Left cardiac atrium (tissue), 4 donors: ENCODE measurements at regions of chr9 and their contacts with region 1.

Region 1: GRCh38 chr9:115883457-115884329 is 269.9 kb upstream of the PAPPA start:
- DNase-seq: no peak
- ATAC-seq: peak; percentile 38 to 68

Region 2: DNA sequence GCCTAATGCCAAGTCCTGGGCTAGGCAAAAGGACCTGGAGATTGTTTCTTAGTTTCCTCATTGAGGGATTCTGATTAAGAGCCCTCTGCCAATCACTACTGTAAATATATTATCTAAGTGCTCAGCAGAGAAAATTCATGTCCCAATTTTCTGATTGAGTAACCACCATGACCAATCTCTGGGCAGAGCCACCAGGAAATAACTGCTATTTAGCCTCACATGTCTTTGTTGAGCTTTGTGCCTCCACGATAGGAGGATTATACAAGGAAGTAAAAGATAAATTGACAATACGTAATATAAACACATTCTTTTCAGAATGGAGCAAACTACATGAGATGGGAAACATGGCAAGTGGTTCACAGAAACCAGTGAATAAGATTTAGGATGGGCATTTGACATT is 126.2 kb before region 1 on chr9:
- intact Hi-C with region 1: no loop called
- DNase-seq: no peak
- ATAC-seq: no peak

Region 3: GRCh38 chr9:115815786-115816185 is 67.9 kb before region 1 on chr9:
- intact Hi-C with region 1: no loop called
- DNase-seq: no peak
- ATAC-seq: no peak

Region 4: GRCh38 chr9:115923903-115924668 is 40.4 kb after region 1 on chr9:
- intact Hi-C with region 1: no loop called
- DNase-seq: peak; percentile 50
- ATAC-seq: peak; percentile 78 to 95

Region 5: DNA sequence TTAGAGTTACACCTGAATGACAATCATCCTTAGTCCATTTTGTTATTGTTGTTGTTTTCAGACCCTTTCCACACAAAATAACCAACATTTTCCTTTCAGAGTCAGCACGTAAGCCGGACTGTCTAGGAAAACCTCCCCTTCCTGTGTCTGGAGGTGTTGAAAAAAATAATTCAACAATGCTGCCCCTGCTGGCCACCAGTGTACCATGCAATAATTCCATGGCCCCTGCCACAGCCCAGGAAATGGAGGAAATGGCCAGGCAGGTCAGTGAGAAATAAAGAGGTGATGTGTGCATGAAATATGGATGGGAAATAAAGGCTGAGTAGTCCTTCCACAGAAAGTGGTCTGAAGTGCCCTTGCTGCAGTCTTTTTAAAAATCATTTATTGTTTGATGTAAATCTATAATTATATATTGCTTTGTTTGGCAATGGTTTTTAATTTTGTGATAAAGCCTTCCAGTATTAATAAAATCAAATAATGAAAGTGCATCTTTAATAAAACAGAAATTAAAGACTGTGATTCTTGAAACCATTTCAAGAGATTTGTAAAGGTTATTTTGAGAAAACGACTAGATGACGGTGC is 117.1 kb after region 1 on chr9:
- intact Hi-C with region 1: loop called in 1 of 2 experiments (anchors 10 kb)
- DNase-seq: no peak
- ATAC-seq: no peak

Region 6: DNA sequence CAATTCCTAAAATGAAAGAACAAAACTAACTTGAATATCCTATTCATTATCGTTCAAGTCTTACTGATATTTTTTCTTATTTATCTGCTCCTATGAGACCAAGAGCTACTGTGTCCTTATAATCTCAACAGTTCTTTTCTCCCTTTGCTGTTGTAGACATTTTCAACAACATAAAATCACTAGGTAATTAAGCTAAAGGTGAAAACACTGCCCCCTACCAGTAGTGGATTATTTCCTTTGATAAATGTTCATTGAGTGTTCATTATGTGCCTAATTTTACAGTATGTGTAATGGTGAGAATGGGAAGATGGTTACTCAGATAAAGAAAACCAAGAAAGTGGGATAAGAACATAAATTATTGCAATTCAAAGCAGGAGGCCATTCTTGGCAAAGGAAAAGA is 228.5 kb after region 1 on chr9:
- intact Hi-C with region 1: loop called (anchors 10 kb)
- DNase-seq: no peak
- ATAC-seq: no peak

Region 7: DNA sequence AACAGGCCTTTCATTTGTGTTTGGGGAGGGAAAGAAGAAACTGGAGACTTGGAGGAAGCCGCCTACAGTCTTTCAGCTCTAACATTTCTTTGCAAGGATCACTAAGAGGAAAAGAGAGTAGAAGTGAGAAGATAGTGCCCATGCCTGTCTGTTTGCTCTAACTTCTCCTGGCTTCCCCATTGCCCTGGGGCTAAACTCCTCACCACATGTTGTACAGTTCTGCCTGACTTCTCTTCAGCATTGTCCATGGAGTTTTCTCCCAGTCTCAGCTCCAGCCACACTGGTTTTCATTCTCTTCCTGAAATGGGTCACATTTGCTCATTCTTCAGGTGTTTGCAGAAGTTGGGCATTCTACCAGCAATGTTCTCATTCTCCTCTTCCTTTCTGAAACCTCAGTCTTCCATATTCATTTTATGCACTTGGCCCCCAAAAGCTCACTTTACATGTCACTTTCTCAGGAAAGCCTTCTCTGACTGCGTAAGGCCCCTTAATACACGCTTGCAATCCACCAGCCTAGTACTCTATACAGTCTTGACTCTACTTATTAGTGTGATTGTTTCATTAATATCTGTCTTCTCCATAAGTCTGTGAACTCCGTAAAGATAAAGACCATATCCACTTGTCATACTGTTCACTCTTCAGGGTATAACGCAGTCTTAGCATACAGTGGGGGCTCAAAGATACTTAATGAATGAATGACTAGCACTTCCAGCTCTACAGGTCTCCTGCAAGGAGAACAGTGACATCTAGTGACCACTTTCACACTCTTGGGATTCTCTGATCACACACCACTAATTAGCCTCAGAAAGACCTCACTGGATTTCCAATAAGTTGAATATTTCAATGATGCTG is 763.2 kb after region 1 on chr9:
- intact Hi-C with region 1: loop called in 1 of 2 experiments (anchors 10 kb)
- DNase-seq: no peak
- ATAC-seq: peak; percentile 81 to 85